ENCODE measurements at regions of chr15 and their contacts with region 1.

Region 1: DNA sequence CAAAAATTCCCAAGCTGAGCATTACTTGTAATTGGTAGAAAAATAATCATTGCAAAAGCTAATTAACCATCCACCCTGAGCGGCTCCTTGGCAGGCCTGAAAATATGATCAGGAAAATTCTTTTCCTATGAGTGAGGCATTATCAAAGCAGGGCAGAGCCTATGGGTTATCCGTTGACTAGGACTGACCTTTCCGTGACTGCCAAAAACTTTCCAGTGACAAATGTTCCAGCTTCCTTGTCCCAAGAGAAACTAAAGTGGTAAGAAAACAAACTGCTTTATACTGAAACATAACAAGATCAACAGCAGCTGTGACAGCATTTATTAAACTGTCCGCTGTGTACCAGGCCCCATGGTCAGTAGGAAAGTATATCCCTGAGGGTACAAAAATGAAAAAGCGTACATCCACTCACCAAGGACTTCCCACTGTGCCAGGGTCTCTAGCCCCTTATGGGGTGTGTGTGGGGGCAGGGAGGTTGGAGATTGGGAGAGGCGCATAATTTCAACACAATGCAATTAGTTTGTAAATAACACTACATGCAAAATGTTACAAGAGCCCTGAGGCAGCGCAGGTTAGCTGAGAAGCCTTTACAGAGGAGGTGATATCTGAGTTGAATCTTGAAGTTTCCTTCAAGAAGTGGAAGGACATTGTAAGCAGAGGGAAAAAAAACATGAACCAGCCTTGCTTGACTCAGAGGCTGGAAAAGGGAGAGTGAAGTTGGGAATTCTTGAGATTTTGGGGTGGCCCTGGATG is 8.5 kb downstream of the LIPC start:
- DNase-seq: peak; percentile 89 to 92
- ATAC-seq: peak; percentile 72 to 82
- H3K4me3 ChIP-seq: peak overlapping the region; percentile 8; the same call in 1 of the 3 replicates
- H3K27ac ChIP-seq: peak overlapping the region; percentile 92 to 93
- H3K4me1 ChIP-seq: peaks cover 70% of the 10 kb centered on the region
- CTCF ChIP-seq: no peak
- EP300 ChIP-seq: peak; percentile 68 to 88; a peak in 4 of 5 replicates
- POLR2A ChIP-seq: no peak
- RAD21 ChIP-seq: peak; percentile 39 to 49; a peak in 4 of 5 replicates

Region 2: DNA sequence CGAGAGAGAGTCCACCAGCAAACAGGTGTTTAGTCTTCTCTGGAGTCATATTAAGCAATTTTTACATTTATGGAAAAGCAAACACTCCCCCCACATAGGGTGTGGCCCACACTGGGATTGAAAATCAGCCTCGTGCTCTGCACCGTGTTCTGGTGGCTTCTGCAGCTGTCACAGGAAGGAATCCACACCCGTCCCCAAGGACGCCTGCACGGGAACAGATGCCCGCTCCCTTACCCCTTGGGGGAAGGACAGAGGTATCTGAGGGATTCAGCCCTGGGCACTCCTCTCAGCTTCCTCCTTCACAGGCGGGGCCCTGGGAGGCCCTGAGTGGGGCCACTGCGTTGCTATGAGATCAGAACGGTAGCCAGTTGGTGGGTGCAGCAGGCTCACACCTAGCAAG is 19.2 kb after region 1 on chr15:
- CTCF ChIA-PET with region 1: interaction called, 10 read pairs
- POLR2A ChIA-PET with region 1: no interaction called
- DNase-seq: no peak
- ATAC-seq: no peak
- H3K4me3 ChIP-seq: no peak overlapping the region
- H3K27ac ChIP-seq: peak overlapping the region; percentile 52 to 70; a peak in 5 of 6 replicates
- H3K4me1 ChIP-seq: peaks cover 48% of the 10 kb centered on the region
- CTCF ChIP-seq: no peak
- EP300 ChIP-seq: no peak
- POLR2A ChIP-seq: no peak
- RAD21 ChIP-seq: no peak

Region 3: DNA sequence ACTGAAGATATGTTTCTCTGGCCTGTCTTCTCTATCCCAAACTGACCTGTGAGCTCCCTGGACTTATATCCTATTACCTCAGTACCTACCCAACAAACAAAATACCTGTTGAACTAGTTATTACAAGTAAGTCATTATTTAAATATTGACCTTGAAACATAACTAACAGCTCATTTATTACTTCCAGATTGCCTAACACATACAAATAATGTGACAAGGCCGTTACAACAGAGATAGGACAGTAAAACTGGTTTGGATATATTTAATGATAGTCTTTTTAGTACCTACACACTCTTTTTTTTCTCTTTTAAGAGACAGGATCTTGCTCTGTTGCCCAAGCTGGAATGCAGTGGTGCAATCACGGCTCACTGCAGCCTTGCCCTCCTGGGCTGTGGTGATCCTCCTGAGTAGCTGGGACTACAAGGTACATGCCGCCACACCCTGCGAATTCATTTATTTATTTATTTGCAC is 164.2 kb after region 1 on chr15:
- CTCF ChIA-PET with region 1: no interaction called
- POLR2A ChIA-PET with region 1: no interaction called
- DNase-seq: no peak
- ATAC-seq: no peak
- H3K4me3 ChIP-seq: no peak overlapping the region
- H3K27ac ChIP-seq: no peak overlapping the region
- H3K4me1 ChIP-seq: no peaks in the 10 kb centered on the region
- CTCF ChIP-seq: no peak
- EP300 ChIP-seq: no peak
- POLR2A ChIP-seq: no peak
- RAD21 ChIP-seq: no peak